Activated CD8-positive, alpha-beta T cell treated with anti-CD3 and anti-CD28 coated beads for 36 hours (primary cell): ENCODE measurements at regions of chr2 and their contacts with region 1.

Region 1: DNA sequence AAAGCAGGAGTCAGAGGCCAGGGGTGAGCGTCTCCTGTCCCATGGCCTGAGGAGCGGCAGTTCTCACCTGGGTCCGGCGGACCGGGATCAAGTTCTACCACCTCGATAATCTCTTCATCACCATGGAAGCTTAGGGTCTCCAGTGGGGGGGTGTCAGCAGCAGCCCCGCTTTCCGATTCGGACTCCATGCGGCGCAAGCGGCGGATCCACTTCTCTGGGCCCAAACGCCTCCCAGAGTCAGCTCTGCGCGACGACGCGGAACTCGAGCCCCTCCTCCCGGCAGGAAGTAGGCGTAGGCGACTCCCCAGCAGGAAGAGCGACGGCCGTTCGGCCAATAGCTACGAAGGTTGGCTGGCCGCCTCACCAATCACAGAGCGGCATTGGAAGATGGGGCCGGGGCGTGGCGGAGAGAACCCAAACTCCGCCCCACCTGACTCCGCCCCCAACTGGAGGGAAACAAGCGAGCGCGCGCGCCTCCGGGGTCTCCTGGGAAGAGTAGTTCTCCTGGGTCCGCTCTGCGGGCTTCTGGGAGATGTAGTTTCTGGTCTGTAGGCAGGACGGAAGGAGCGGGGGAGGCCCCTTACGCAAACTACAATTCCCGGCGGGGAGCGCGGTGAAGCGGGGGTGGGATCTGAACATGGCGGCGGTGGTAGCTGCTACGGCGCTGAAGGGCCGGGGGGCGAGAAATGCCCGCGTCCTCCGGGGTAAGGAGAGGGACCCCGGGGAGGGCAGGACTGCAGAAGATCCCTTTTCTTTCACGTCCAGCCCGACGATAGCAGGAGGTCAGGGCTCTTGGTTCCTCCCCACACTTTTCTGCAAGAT is at the starts of genes AAMP and PNKD:
- DNase-seq: peak; percentile 100
- ATAC-seq: peak; percentile 93
- H3K4me3 Mint-ChIP-seq: peak within 1 kb of the TSS; percentile 84
- H3K27ac Mint-ChIP-seq: peak within 1 kb of the TSS; percentile 93
- H3K4me1 Mint-ChIP-seq: peaks cover 35% of the 10 kb centered on the region
- H3K27me3 Mint-ChIP-seq: no peaks in the 10 kb centered on the region
- CTCF ChIP-seq: no peak
- total RNA-seq, gene AAMP: 75.8 to 82.8 TPM
- total RNA-seq, gene PNKD: 19.8 to 24.4 TPM

Region 2: DNA sequence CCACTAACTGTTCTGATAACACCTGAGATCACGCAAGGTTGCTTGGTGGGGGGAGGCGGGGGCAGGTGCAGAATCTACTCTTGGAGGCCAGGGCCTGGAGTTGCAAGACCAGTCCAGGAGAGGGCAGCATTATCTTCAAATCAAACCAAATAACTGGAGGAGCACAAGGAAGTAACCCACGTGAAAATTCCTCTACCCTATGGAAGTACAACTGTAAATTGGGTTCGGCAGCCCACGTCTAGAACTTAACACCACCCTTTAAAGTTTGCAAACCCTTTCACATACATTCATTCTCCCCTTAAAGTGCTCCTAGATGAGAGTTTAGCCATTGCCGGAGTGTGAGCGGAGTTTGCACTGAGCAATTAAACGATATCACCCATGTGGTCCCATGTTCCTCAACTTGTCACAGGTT is 83.7 kb before region 1 on chr2:
- CTCF ChIA-PET with region 1: interaction called, 12 read pairs
- POLR2A ChIA-PET with region 1: interaction called, 3 read pairs
- intact Hi-C with region 1: no loop called
- DNase-seq: peak; percentile 89
- ATAC-seq: peak; percentile 98
- H3K4me3 Mint-ChIP-seq: no peak overlapping the region
- H3K27ac Mint-ChIP-seq: peak overlapping the region; percentile 55
- H3K4me1 Mint-ChIP-seq: peaks cover 9% of the 10 kb centered on the region
- H3K27me3 Mint-ChIP-seq: no peaks in the 10 kb centered on the region
- CTCF ChIP-seq: peak; percentile 86

Region 3: GRCh38 chr2:218257390-218257981 is 12.6 kb before region 1 on chr2:
- CTCF ChIA-PET with region 1: interaction called, 10 read pairs
- POLR2A ChIA-PET with region 1: interaction called, 15 read pairs
- intact Hi-C with region 1: no loop called
- DNase-seq: peak; percentile 80
- ATAC-seq: peak; percentile 84
- H3K4me3 Mint-ChIP-seq: no peak overlapping the region
- H3K27ac Mint-ChIP-seq: peak overlapping the region; percentile 87
- H3K4me1 Mint-ChIP-seq: peaks cover 27% of the 10 kb centered on the region
- H3K27me3 Mint-ChIP-seq: no peaks in the 10 kb centered on the region
- CTCF ChIP-seq: peak; percentile 62

Region 4: GRCh38 chr2:218286570-218287459 is 16.7 kb after region 1 on chr2:
- CTCF ChIA-PET with region 1: interaction called, 161 read pairs
- POLR2A ChIA-PET with region 1: interaction called, 97 read pairs
- intact Hi-C with region 1: loop called (anchors 2 kb)
- DNase-seq: peak; percentile 93
- ATAC-seq: peak; percentile 78
- H3K4me3 Mint-ChIP-seq: peak overlapping the region; percentile 83
- H3K27ac Mint-ChIP-seq: peak overlapping the region; percentile 95
- H3K4me1 Mint-ChIP-seq: peaks cover 75% of the 10 kb centered on the region
- H3K27me3 Mint-ChIP-seq: no peaks in the 10 kb centered on the region
- CTCF ChIP-seq: no peak

Region 5: DNA sequence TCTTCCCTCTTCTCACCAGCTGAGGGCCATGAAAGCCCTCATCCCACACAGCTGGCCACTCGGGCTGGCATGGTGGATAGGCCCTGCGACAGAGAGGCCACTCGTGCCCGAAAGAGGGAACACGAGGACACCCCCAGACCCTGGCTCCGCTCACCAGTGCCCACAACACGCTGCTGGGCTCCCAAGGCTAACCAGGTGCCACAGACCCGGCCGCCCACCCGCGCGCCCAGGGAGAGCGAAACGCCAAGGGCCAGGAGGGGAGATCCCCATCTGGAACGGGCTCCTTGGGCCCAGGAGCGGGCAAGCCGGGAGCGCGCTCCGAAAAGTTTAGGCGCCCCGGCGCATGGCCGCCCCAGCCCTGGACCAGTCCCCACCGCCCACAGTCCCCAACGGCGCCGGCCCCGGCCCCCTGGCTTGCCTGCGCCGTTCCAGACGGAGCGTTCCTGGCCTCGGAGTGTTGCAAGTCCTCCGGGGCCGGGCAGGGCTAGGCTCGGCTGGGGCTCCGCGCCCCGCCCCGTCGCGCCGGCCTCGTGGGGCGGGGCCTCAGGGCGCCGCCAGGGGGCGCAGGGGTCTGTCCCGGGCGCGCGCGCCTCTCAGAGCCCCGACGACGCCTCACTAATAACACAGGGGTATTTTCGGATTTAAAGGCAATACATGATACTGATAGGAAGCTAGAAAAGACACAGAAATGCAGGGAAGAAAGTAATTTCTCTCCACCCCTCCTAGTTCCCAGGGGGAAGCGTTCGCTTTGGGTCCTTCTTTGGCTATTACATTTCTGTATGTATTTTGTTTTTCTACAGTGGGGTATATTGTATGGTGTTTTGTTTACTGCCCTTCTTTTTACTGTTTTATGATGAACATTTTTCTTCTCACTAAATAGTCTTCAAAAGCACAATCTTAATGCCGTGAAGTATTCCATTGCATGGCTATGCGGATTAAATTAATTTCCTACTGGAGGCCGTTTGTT is 22.2 kb after region 1 on chr2 and contains the start of gene TMBIM1:
- CTCF ChIA-PET with region 1: interaction called, 161 read pairs
- POLR2A ChIA-PET with region 1: interaction called, 97 read pairs
- intact Hi-C with region 1: loop called (anchors 2 kb)
- DNase-seq: peak; percentile 83
- ATAC-seq: peak; percentile 92
- H3K4me3 Mint-ChIP-seq: peak within 1 kb of the TSS; percentile 88
- H3K27ac Mint-ChIP-seq: peak within 1 kb of the TSS; percentile 92
- H3K4me1 Mint-ChIP-seq: peaks cover 49% of the 10 kb centered on the region
- H3K27me3 Mint-ChIP-seq: no peaks in the 10 kb centered on the region
- CTCF ChIP-seq: peak; percentile 97
- total RNA-seq, gene TMBIM1: 53.5 to 57.9 TPM

Region 6: GRCh38 chr2:218301176-218301819 is 31.2 kb after region 1 on chr2:
- CTCF ChIA-PET with region 1: interaction called, 125 read pairs
- POLR2A ChIA-PET with region 1: no interaction called
- intact Hi-C with region 1: no loop called
- DNase-seq: peak; percentile 95
- ATAC-seq: peak; percentile 97
- H3K4me3 Mint-ChIP-seq: no peak overlapping the region
- H3K27ac Mint-ChIP-seq: no peak overlapping the region
- H3K4me1 Mint-ChIP-seq: peaks cover 5% of the 10 kb centered on the region
- H3K27me3 Mint-ChIP-seq: no peaks in the 10 kb centered on the region
- CTCF ChIP-seq: peak; percentile 90

Region 7: GRCh38 chr2:218360447-218360846 is 90.3 kb after region 1 on chr2:
- CTCF ChIA-PET with region 1: interaction called, 43 read pairs
- POLR2A ChIA-PET with region 1: no interaction called
- intact Hi-C with region 1: no loop called
- DNase-seq: no peak
- ATAC-seq: no peak
- H3K4me3 Mint-ChIP-seq: no peak overlapping the region
- H3K27ac Mint-ChIP-seq: no peak overlapping the region
- H3K4me1 Mint-ChIP-seq: no peaks in the 10 kb centered on the region
- H3K27me3 Mint-ChIP-seq: no peaks in the 10 kb centered on the region
- CTCF ChIP-seq: no peak